H1 (cell line): ENCODE measurements at regions of chr6 and their contacts with region 1.

Region 1: DNA sequence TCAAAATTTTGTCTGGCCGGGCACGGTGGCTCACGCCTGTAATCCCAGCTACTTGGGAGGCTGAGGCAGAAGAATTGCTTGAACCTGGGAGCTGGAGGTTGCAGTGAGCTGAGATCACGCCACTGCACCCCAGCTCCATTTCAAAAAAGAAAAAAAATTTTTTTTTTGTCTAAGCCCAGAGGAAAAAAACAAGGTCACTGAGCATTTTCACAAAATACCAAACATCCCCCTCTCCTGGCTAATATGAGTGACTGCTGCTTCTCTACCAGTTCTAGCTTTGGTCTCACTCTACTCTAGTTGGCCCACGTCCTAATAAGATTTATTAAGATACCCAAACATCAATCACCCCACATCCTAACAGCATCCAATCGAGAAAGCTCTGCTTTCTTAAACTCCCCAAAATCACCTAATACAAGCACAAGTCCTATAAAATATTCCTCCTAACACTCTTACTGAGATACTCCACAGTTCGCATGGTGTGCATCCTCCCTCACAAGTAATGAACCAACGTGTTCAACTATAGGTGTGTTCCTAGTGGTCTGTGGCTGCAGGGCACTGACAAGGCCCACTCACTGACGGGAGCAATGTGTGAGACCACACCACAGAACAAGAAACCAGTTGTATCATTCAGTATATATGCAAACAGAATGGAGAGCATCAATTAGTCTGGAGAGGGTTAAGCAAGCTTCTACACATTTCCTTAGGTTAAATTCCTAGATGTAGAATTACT is 64.2 kb downstream of the FKBP5 start:
- DNase-seq: no peak
- H3K4me3 ChIP-seq: no peak overlapping the region
- H3K27ac ChIP-seq: no peak overlapping the region
- H3K4me1 ChIP-seq: no peaks in the 10 kb centered on the region
- H3K27me3 ChIP-seq: no peaks in the 10 kb centered on the region
- CTCF ChIP-seq: peak in 2 of 3 experiments; percentile 28 to 40; a peak in 2 of 4 replicates
- EP300 ChIP-seq: no peak
- POLR2A ChIP-seq: no peak
- RAD21 ChIP-seq: peak in 1 of 2 experiments; percentile 39; a peak in 2 of 4 replicates

Region 2: GRCh38 chr6:35489995-35490733 is 134.3 kb before region 1 on chr6:
- CTCF ChIA-PET with region 1: no interaction called
- POLR2A ChIA-PET with region 1: no interaction called
- DNase-seq: peak in 1 of 2 experiments; percentile 84
- H3K4me3 ChIP-seq: peak overlapping the region; percentile 21 to 56 (median 44); a peak in 7 of 8 replicates
- H3K27ac ChIP-seq: peak overlapping the region; percentile 43; the same call in 1 of the 2 replicates
- H3K4me1 ChIP-seq: peaks cover 31 to 83% (median 70%) of the 10 kb centered on the region in 4 experiments
- H3K27me3 ChIP-seq: no peaks in the 10 kb centered on the region
- CTCF ChIP-seq: no peak
- EP300 ChIP-seq: peak in 1 of 2 experiments; percentile 80; a peak in 1 of 3 replicates
- POLR2A ChIP-seq: no peak; a peak in 1 of 3 replicates
- RAD21 ChIP-seq: no peak

Region 3: GRCh38 chr6:35583893-35584688 is 40.4 kb before region 1 on chr6:
- CTCF ChIA-PET with region 1: interaction called, 28 read pairs
- POLR2A ChIA-PET with region 1: no interaction called
- DNase-seq: peak; percentile 23 to 74
- H3K4me3 ChIP-seq: no peak overlapping the region
- H3K27ac ChIP-seq: no peak overlapping the region
- H3K4me1 ChIP-seq: no peaks in the 10 kb centered on the region
- H3K27me3 ChIP-seq: no peaks in the 10 kb centered on the region
- CTCF ChIP-seq: peak in 2 of 3 experiments; percentile 80 to 92; a peak in 3 of 4 replicates
- EP300 ChIP-seq: no peak
- POLR2A ChIP-seq: no peak
- RAD21 ChIP-seq: peak; percentile 94 to 96

Region 4: GRCh38 chr6:35590622-35591066 is 33.9 kb before region 1 on chr6:
- CTCF ChIA-PET with region 1: interaction called, 28 read pairs
- POLR2A ChIA-PET with region 1: interaction called, 3 read pairs
- DNase-seq: no peak
- H3K4me3 ChIP-seq: no peak overlapping the region
- H3K27ac ChIP-seq: no peak overlapping the region
- H3K4me1 ChIP-seq: no peaks in the 10 kb centered on the region
- H3K27me3 ChIP-seq: no peaks in the 10 kb centered on the region
- CTCF ChIP-seq: no peak
- EP300 ChIP-seq: no peak
- POLR2A ChIP-seq: no peak
- RAD21 ChIP-seq: no peak

Region 5: DNA sequence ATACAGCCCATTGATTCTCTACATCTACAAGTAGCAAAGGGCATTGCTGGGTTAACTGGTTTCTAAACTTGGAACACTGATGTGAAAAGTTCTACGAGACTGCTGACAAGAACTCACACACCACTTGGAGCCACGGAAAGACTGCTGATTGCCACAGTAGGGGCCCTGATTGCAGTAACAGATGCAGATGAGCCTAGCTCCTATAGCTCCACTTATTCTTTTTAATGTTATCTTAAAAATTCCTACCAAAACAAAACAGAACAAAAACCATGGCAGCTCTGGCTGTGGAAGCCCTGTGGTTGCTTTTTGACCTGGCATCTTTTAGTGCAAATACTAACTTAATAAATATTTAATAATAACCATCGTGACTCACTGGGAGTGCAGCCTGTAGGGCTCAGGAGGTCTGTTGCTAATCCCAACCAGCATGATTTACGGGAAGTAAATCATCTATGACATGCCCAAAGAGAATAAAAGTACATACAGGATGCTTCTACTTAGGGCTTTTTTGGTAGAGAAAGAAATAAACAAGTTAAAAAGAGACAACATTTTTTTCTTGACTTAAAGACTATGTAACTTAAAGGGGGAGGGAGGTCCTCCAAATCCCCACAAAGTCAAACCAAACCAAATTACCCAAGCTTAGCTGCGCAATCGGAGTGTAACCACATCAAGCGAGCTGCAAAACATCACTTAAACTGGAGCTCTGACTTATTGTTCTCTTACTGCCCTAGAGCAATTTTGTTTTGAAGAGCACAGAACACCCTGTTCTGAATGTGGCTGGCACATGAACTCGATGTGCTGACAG is 23.0 kb before region 1 on chr6:
- CTCF ChIA-PET with region 1: interaction called, 10 read pairs
- POLR2A ChIA-PET with region 1: no interaction called
- DNase-seq: peak in 1 of 2 experiments; percentile 9
- H3K4me3 ChIP-seq: no peak overlapping the region
- H3K27ac ChIP-seq: no peak overlapping the region
- H3K4me1 ChIP-seq: peaks cover 2 to 16% (median 7%) of the 10 kb centered on the region in 4 experiments; a peak in 5 of 7 replicates
- H3K27me3 ChIP-seq: no peaks in the 10 kb centered on the region
- CTCF ChIP-seq: no peak
- EP300 ChIP-seq: no peak
- POLR2A ChIP-seq: no peak
- RAD21 ChIP-seq: no peak

Region 6: GRCh38 chr6:35611240-35611639 is 13.3 kb before region 1 on chr6:
- CTCF ChIA-PET with region 1: interaction called, 14 read pairs
- POLR2A ChIA-PET with region 1: interaction called, 3 read pairs
- DNase-seq: no peak
- H3K4me3 ChIP-seq: no peak overlapping the region
- H3K27ac ChIP-seq: no peak overlapping the region
- H3K4me1 ChIP-seq: no peaks in the 10 kb centered on the region; a peak in 1 of 7 replicates
- H3K27me3 ChIP-seq: no peaks in the 10 kb centered on the region
- CTCF ChIP-seq: no peak
- EP300 ChIP-seq: no peak
- POLR2A ChIP-seq: no peak
- RAD21 ChIP-seq: no peak

Region 7: GRCh38 chr6:35640017-35640664 is 15.6 kb after region 1 on chr6:
- CTCF ChIA-PET with region 1: interaction called, 12 read pairs
- POLR2A ChIA-PET with region 1: no interaction called
- DNase-seq: no peak
- H3K4me3 ChIP-seq: no peak overlapping the region
- H3K27ac ChIP-seq: no peak overlapping the region
- H3K4me1 ChIP-seq: peaks cover 0 to 3% (median 0%) of the 10 kb centered on the region in 4 experiments; a peak in 2 of 7 replicates
- H3K27me3 ChIP-seq: no peaks in the 10 kb centered on the region
- CTCF ChIP-seq: no peak
- EP300 ChIP-seq: no peak
- POLR2A ChIP-seq: no peak
- RAD21 ChIP-seq: no peak